OCI-LY7 (cell line): ENCODE measurements at regions of chr11 and their contacts with region 1.

Region 1: DNA sequence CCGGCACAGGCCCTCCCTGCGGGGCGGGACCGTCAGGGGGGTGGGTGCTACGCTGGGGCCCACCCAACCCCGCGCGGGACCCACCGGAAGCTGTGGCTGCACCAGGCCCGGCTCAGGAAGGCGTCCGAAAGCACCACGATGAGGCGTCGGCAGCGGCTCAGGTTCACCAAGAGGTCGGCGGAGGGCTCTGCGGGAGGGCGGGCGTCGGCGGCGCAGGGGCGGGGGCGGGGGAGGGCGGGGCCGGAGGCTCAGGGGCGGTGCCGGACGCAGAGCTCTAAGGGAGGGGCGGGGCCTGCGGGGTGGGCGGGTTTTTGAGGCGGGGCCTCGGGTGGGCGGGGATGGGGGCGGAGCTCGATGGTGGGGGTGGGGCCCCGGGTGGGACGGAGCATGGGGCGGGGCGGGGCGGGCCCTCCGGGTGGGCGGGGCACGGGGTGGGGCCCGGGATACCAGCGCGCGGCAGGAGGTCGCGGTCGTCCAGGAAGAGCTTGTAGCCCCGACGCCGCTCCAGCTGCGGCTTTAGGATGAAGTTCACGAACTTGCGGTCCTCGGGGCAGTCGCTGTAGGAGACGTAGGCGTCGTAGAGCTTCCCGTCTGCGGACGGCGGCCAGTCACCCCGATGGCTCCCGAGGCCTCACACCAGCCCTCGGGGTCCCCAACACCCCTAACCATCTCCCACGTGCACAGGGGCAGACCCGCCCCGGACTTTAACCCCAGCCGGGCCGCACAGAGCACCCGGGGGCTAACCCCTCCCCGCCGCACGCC is 7.6 kb downstream of the SIGIRR start:
- DNase-seq: peak; percentile 94
- H3K4me3 ChIP-seq: peak overlapping the region; percentile 73
- H3K27ac ChIP-seq: peak overlapping the region; percentile 74
- H3K4me1 ChIP-seq: peaks cover 11% of the 10 kb centered on the region
- CTCF ChIP-seq: no peak

Region 2: GRCh38 chr11:363948-364761 is 43.0 kb before region 1 on chr11:
- CTCF ChIA-PET with region 1: no interaction called
- POLR2A ChIA-PET with region 1: interaction called, 10 read pairs
- intact Hi-C with region 1: no loop called
- DNase-seq: peak; percentile 74
- H3K4me3 ChIP-seq: no peak overlapping the region
- H3K27ac ChIP-seq: no peak overlapping the region
- H3K4me1 ChIP-seq: no peaks in the 10 kb centered on the region
- CTCF ChIP-seq: peak; percentile 82

Region 3: DNA sequence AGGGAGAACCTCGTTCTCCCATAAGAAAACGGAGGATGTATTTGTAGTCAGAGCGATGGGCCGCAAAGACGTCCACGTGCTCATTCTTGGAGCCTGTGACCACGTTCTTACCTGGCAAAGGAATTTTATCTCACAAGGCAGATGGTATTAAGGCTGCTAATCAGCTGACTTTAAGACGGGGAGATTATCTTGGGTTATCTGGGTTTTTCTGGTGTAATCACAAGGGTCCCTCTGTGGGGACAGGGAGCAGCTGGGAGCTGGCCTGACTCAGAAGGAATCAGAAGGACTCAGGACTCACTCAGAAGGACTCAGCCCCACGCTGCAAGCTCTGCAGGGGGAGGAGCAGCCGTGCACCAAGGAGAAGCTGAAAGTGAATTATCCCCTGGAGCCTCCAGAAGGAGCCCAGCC is 15.1 kb after region 1 on chr11:
- CTCF ChIA-PET with region 1: interaction called, 10 read pairs
- POLR2A ChIA-PET with region 1: no interaction called
- intact Hi-C with region 1: no loop called
- DNase-seq: no peak
- H3K4me3 ChIP-seq: no peak overlapping the region
- H3K27ac ChIP-seq: no peak overlapping the region
- H3K4me1 ChIP-seq: no peaks in the 10 kb centered on the region
- CTCF ChIP-seq: no peak

Region 4: GRCh38 chr11:494761-495536 is 87.8 kb after region 1 on chr11:
- CTCF ChIA-PET with region 1: interaction called, 14 read pairs
- POLR2A ChIA-PET with region 1: no interaction called
- intact Hi-C with region 1: no loop called
- DNase-seq: no peak
- H3K4me3 ChIP-seq: no peak overlapping the region
- H3K27ac ChIP-seq: no peak overlapping the region
- H3K4me1 ChIP-seq: peaks cover 15% of the 10 kb centered on the region
- CTCF ChIP-seq: no peak

Region 5: GRCh38 chr11:506238-506994 is 99.3 kb after region 1 on chr11:
- CTCF ChIA-PET with region 1: no interaction called
- POLR2A ChIA-PET with region 1: no interaction called
- intact Hi-C with region 1: loop called (anchors 5 kb)
- DNase-seq: peak; percentile 98
- H3K4me3 ChIP-seq: peak overlapping the region; percentile 95
- H3K27ac ChIP-seq: peak overlapping the region; percentile 85
- H3K4me1 ChIP-seq: peaks cover 32% of the 10 kb centered on the region
- CTCF ChIP-seq: no peak